ENCODE measurements at regions of chr6 and their contacts with region 1.

Region 1: DNA sequence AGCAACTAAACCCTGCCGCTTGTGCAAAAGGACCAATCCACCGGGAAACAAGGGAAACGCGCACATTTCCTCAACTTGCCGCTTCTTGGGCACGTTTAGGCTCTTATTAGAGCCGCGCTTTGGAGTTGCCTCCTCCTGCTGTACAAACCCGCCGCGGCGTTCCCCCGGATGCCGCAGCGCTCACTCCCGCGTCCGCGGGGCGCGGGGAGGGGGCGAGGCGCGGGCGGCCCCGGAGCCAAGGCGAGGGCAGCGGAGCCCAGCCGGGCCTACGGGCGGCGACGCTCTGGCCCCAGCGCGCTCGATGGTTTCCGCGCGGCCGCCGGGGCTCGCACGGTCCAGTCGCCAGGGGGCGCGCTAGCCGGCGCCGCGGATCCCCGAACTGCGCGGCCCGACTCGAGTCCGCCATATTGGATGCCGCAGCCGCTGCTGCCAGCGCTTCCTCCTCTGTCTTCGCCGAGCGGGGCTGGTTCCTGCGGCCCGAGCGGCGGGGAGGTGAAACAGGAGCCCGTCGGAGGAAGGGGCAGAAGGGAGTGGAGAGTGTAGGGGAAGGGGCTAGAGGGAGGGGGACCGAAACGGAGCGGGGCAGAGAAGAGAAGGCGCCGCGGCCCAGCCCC is at the start of gene SCAF8:
- DNase-seq: peak; percentile 94
- ATAC-seq: peak; percentile 77
- H3K4me3 Mint-ChIP-seq: peak within 1 kb of the TSS; percentile 89
- H3K27ac Mint-ChIP-seq: peak within 1 kb of the TSS; percentile 98
- H3K4me1 Mint-ChIP-seq: peaks cover 41% of the 10 kb centered on the region
- H3K27me3 Mint-ChIP-seq: no peaks in the 10 kb centered on the region
- CTCF ChIP-seq: no peak
- total RNA-seq, gene SCAF8: 56.8 and 65.2 TPM in 2 replicates

Region 2: DNA sequence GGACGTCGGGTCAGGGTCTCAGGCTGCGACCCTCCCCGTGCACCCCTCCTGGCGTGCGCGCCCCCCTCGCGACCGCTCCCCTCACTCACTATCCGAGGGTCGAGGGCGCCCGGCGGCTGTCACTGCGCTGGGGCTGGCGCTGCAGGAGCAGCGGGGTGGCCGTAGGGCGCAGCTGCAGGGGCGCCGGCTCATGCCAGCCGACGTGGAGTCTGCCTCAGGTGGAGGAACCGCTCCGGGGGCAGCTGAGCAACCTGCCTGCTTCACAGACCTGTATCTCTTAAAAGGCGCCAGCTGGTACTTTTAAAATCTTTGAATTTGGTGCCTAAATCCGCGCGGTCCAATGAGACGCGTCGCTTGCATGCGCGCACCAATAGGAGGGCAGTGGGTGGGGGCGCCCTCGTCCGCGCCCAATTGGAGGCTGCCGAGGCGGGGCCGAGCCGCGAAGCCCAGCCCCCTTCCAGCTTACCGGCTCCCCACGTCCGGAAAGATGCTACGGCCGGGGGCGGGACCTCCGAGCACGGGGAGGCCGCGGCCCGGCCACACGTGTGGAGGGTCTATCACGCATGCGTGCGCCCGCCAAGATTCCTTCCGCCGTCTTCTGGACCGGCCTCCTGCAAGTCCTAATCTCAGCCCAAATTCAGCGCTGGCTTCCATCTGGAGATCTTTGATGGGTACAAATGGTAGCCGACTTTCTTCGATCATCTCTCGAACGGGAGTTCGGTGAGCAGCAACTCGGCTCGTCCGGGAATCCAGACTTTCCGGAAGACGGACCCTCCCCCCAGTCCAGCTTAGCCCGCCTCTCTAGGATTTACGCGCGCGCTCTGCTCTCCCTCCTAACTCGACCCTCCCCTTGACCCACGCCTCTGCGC is 1750.1 kb before region 1 on chr6 and contains the start of gene FBXO5:
- CTCF ChIA-PET with region 1: no interaction called
- POLR2A ChIA-PET with region 1: no interaction called
- intact Hi-C with region 1: loop called (anchors 2 kb)
- DNase-seq: peak; percentile 95
- ATAC-seq: peak; percentile 92
- H3K4me3 Mint-ChIP-seq: peak within 1 kb of the TSS; percentile 100
- H3K27ac Mint-ChIP-seq: peak within 1 kb of the TSS; percentile 100
- H3K4me1 Mint-ChIP-seq: peaks cover 41% of the 10 kb centered on the region
- H3K27me3 Mint-ChIP-seq: no peaks in the 10 kb centered on the region
- CTCF ChIP-seq: no peak
- total RNA-seq, gene FBXO5: 11.9 and 13.3 TPM in 2 replicates

Region 3: GRCh38 chr6:154471609-154472362 is 261.3 kb before region 1 on chr6:
- CTCF ChIA-PET with region 1: no interaction called
- POLR2A ChIA-PET with region 1: no interaction called
- intact Hi-C with region 1: no loop called
- DNase-seq: no peak
- ATAC-seq: no peak
- H3K4me3 Mint-ChIP-seq: no peak overlapping the region
- H3K27ac Mint-ChIP-seq: no peak overlapping the region
- H3K4me1 Mint-ChIP-seq: no peaks in the 10 kb centered on the region
- H3K27me3 Mint-ChIP-seq: no peaks in the 10 kb centered on the region
- CTCF ChIP-seq: no peak

Region 4: DNA sequence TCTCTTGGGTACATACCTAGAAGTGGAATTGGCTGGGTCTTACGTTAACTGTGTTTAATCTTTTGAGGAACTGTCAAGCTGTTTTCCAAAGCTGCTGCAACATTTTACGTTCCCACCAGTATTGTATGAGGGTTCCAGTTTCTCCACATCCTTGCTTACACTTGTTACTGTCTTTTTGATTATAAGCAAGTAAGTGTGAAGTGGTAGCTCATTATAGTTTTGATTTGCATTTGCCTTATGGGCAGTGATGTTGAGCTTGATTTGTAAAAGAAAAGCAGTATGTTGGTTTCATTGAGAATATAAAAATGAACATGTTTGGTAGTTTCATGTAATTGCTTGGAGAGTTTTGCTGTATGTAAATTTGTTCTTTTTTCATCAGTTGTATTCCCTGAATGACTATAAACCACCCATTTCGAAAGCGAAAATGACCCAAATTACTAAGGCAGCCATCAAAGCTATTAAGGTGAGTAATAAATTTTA is 40.5 kb after region 1 on chr6:
- CTCF ChIA-PET with region 1: no interaction called
- POLR2A ChIA-PET with region 1: interaction called, 4 read pairs
- intact Hi-C with region 1: loop called (anchors 1 kb)
- DNase-seq: no peak
- ATAC-seq: peak; percentile 81
- H3K4me3 Mint-ChIP-seq: peak overlapping the region; percentile 33
- H3K27ac Mint-ChIP-seq: peak overlapping the region; percentile 64
- H3K4me1 Mint-ChIP-seq: peaks cover 41% of the 10 kb centered on the region
- H3K27me3 Mint-ChIP-seq: no peaks in the 10 kb centered on the region
- CTCF ChIP-seq: no peak

Region 5: GRCh38 chr6:154791556-154792317 is 58.6 kb after region 1 on chr6:
- CTCF ChIA-PET with region 1: no interaction called
- POLR2A ChIA-PET with region 1: no interaction called
- intact Hi-C with region 1: no loop called
- DNase-seq: no peak
- ATAC-seq: no peak
- H3K4me3 Mint-ChIP-seq: no peak overlapping the region
- H3K27ac Mint-ChIP-seq: peak overlapping the region; percentile 20
- H3K4me1 Mint-ChIP-seq: peaks cover 14% of the 10 kb centered on the region
- H3K27me3 Mint-ChIP-seq: no peaks in the 10 kb centered on the region
- CTCF ChIP-seq: no peak

Region 6: DNA sequence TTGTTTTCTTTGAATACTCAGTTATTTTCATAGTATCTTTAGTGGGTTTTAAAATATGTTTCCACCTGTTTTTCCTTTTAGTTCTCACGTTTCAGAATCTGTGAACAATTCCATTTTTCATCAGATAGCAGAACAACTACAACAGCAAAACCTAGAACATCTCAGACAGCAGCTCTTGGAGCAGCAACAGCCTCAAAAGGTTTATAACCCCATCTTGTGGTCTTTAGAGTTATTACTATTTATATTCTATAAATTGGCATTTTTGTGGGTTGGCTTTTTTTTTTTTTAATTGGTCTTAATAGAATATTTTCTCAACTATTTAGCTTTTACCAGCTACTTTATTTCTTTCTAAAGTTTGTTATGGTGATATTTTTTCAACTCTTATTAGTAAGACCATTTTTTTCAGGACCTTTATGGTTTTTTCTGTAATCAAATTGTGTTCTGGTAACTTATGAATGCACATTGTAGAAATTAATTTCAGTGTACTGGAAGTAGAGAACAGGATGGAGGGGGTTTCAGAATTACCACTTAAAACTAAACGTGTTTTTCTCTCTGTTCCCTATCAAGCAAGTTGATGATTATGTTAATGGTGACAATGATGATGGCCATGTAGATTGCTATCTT is 72.3 kb after region 1 on chr6:
- CTCF ChIA-PET with region 1: interaction called, 4 read pairs
- POLR2A ChIA-PET with region 1: interaction called, 7 read pairs
- intact Hi-C with region 1: loop called (anchors 1 kb)
- DNase-seq: no peak
- ATAC-seq: peak; percentile 69
- H3K4me3 Mint-ChIP-seq: no peak overlapping the region
- H3K27ac Mint-ChIP-seq: no peak overlapping the region
- H3K4me1 Mint-ChIP-seq: peaks cover 6% of the 10 kb centered on the region
- H3K27me3 Mint-ChIP-seq: no peaks in the 10 kb centered on the region
- CTCF ChIP-seq: no peak

Region 7: DNA sequence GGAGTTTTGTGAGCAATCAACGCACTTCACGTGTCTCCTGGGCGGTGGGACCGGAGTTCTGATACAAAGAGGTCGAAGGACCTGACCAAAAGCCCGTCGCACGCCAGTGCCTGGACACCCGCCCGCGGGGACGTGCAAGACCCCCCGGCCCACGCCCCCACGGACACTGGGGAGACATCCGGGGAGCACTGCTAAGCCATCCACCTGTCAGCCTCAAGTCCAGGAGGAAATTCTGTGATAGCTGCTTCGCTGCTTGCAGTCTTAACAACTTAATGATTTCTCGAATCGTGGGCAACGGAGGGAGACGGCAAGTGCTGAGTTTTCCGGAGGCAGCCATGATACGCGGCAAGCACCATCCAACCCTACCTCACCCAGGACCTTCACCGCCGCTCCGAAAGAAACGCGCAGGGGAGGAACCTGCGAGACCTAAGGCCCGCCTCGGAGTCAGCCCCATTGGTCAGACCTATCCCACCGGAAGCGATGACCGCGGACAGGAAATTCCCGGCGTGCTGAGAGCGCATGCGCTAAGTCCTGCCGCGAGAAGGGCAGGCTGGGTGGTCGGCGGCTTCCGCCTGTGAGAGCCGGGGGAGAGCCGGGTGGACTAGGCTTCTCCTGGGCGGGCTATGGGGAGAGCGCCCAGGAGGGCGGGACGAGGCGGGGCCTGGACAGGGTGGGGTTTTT is 581.1 kb after region 1 on chr6 and contains the start of gene TFB1M:
- CTCF ChIA-PET with region 1: no interaction called
- POLR2A ChIA-PET with region 1: no interaction called
- intact Hi-C with region 1: loop called (anchors 1 kb)
- DNase-seq: peak; percentile 90
- ATAC-seq: peak; percentile 94
- H3K4me3 Mint-ChIP-seq: peak within 1 kb of the TSS; percentile 97
- H3K27ac Mint-ChIP-seq: peak within 1 kb of the TSS; percentile 93
- H3K4me1 Mint-ChIP-seq: peaks cover 28% of the 10 kb centered on the region
- H3K27me3 Mint-ChIP-seq: no peaks in the 10 kb centered on the region
- CTCF ChIP-seq: no peak
- total RNA-seq, gene TFB1M: 35.2 and 41.5 TPM in 2 replicates